Endothelial cell of umbilical vein (primary cell): ENCODE measurements at regions of chr5 and their contacts with region 1.

Region 1: GRCh38 chr5:141835928-141836670 is 42.1 kb downstream of the PCDH1 start:
- DNase-seq: peak; percentile 87
- H3K4me3 ChIP-seq: no peak overlapping the region
- H3K27ac ChIP-seq: peak overlapping the region; percentile 78
- H3K4me1 ChIP-seq: peaks cover 66% of the 10 kb centered on the region
- H3K27me3 ChIP-seq: no peaks in the 10 kb centered on the region
- CTCF ChIP-seq: no peak
- POLR2A ChIP-seq: no peak

Region 2: GRCh38 chr5:141805874-141806595 is 30.1 kb before region 1 on chr5:
- CTCF ChIA-PET with region 1: interaction called, 3 read pairs
- POLR2A ChIA-PET with region 1: no interaction called
- dilution Hi-C with region 1: no loop called
- intact Hi-C with region 1: loop called (anchors 1 kb)
- DNase-seq: peak; percentile 86
- H3K4me3 ChIP-seq: no peak overlapping the region
- H3K27ac ChIP-seq: peak overlapping the region; percentile 81
- H3K4me1 ChIP-seq: peaks cover 25% of the 10 kb centered on the region
- H3K27me3 ChIP-seq: peaks cover 0 to 1% of the 10 kb centered on the region in 2 experiments
- CTCF ChIP-seq: no peak
- POLR2A ChIP-seq: no peak

Region 3: DNA sequence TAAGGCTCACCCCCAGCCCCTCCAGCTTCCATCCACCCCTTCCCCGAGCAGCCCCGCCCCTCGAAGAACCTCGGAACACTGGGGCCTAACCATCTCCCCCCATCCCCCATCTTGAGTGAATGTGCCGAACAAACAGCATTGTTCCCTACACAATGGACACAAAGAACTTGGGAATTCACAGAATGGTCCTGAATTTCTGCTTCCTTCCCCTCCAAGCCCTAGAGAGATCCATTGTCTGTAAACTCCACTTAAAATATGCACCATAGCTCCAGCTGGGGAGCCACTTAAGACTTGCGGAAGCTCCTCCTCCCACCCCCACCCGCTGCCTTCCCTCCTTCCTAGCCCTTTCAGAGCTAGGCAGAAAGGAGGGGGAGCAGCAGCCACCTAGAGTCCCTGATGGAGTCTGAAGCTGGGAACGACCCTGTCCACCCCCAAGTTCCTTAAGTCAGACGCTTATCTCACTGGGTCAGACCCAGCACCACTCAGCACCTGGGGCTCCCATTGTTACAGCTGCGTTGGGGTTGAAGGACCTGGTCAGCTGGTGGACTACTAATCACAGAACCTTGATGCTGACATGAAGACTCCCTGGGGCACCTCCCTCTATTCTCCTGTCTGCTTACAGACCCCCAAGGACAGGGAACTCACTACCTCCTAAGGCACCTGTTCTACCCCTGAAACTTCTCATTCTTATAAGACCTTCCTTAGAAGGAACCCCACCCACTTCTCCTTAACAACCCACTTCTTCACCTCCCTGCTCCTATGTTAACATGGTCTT is 19.3 kb before region 1 on chr5:
- CTCF ChIA-PET with region 1: interaction called, 8 read pairs
- POLR2A ChIA-PET with region 1: interaction called, 4 read pairs
- dilution Hi-C with region 1: no loop called
- intact Hi-C with region 1: loop called (anchors 1 kb)
- DNase-seq: peak; percentile 81
- H3K4me3 ChIP-seq: no peak overlapping the region
- H3K27ac ChIP-seq: peak overlapping the region; percentile 74
- H3K4me1 ChIP-seq: peaks cover 24% of the 10 kb centered on the region
- H3K27me3 ChIP-seq: no peaks in the 10 kb centered on the region
- CTCF ChIP-seq: no peak
- POLR2A ChIP-seq: no peak